ENCODE measurements at regions of chr4 and their contacts with region 1.

Region 1: DNA sequence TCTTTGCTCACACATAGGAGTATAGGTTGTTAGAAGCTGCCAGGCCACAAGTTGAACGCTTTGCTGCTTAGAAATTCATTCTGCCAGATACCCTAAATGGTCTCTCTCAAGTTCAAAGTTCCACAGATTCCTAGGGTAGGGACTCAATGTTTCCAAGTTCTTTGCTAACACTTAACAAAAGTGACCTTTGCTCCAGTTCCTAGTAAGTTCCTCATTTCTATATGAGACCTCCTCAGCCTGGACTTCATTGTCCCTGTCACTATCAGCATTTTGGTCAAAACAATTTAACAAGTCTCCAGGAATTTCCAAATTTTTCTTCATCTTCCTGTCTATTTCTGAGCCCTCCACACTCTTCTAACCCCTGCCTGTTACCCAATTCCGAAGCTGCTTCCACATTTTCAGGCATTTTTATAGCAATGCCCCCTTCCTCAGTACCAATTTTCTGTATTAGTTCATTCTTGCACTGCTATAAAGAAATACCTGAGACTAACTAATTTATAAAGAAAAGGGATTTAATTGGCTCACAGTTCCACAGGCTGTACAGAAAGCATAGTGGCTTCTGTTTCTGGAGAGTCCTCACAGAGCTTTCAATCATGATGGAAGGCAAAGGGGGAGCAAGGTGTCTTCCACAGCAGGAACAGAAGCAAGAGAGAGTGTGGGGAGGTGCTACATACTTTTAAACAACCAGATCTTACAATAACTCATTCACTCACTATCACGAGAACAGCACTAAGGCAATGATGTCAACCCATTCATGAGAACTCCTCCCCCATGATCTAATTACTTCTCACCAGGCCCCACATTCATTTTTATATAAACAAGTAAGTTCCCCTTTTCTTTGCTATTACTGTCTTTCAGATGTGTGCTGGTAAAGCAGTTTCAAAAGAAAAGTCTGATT is 11.5 kb upstream of the TLR1 start:
- DNase-seq: no peak
- ATAC-seq: peak; percentile 74
- H3K4me3 Mint-ChIP-seq: peak overlapping the region; percentile 82
- H3K27ac Mint-ChIP-seq: peak overlapping the region; percentile 94
- H3K4me1 Mint-ChIP-seq: peaks cover 74% of the 10 kb centered on the region
- H3K27me3 Mint-ChIP-seq: no peaks in the 10 kb centered on the region
- CTCF ChIP-seq: no peak

Region 2: GRCh38 chr4:38782452-38783108 is 33.6 kb before region 1 on chr4 and contains the start of gene TLR10:
- CTCF ChIA-PET with region 1: interaction called, 4 read pairs
- POLR2A ChIA-PET with region 1: interaction called, 13 read pairs
- intact Hi-C with region 1: loop called (anchors 1 kb)
- DNase-seq: no peak
- ATAC-seq: peak; percentile 80
- H3K4me3 Mint-ChIP-seq: peak within 1 kb of the TSS; percentile 100
- H3K27ac Mint-ChIP-seq: peak within 1 kb of the TSS; percentile 98
- H3K4me1 Mint-ChIP-seq: peaks cover 64% of the 10 kb centered on the region
- H3K27me3 Mint-ChIP-seq: no peaks in the 10 kb centered on the region
- CTCF ChIP-seq: no peak
- total RNA-seq, gene TLR10: 92.0 and 107 TPM in 2 replicates

Region 3: GRCh38 chr4:38831653-38832052 is 15.5 kb after region 1 on chr4:
- CTCF ChIA-PET with region 1: interaction called, 3 read pairs
- POLR2A ChIA-PET with region 1: no interaction called
- intact Hi-C with region 1: loop called (anchors 2 kb)
- DNase-seq: no peak
- ATAC-seq: no peak
- H3K4me3 Mint-ChIP-seq: no peak overlapping the region
- H3K27ac Mint-ChIP-seq: no peak overlapping the region
- H3K4me1 Mint-ChIP-seq: peaks cover 38% of the 10 kb centered on the region
- H3K27me3 Mint-ChIP-seq: no peaks in the 10 kb centered on the region
- CTCF ChIP-seq: no peak

Region 4: GRCh38 chr4:38837849-38838248 is 21.7 kb after region 1 on chr4:
- CTCF ChIA-PET with region 1: no interaction called
- POLR2A ChIA-PET with region 1: interaction called, 4 read pairs
- intact Hi-C with region 1: loop called (anchors 2 kb)
- DNase-seq: no peak
- ATAC-seq: peak; percentile 40
- H3K4me3 Mint-ChIP-seq: peak overlapping the region; percentile 21
- H3K27ac Mint-ChIP-seq: peak overlapping the region; percentile 60
- H3K4me1 Mint-ChIP-seq: peaks cover 46% of the 10 kb centered on the region
- H3K27me3 Mint-ChIP-seq: no peaks in the 10 kb centered on the region
- CTCF ChIP-seq: no peak